Activated B cell treated with CpG ODN at 0.5 μM for 24 hours (primary cell): ENCODE measurements at regions of chr12 and their contacts with region 1.

Region 1: DNA sequence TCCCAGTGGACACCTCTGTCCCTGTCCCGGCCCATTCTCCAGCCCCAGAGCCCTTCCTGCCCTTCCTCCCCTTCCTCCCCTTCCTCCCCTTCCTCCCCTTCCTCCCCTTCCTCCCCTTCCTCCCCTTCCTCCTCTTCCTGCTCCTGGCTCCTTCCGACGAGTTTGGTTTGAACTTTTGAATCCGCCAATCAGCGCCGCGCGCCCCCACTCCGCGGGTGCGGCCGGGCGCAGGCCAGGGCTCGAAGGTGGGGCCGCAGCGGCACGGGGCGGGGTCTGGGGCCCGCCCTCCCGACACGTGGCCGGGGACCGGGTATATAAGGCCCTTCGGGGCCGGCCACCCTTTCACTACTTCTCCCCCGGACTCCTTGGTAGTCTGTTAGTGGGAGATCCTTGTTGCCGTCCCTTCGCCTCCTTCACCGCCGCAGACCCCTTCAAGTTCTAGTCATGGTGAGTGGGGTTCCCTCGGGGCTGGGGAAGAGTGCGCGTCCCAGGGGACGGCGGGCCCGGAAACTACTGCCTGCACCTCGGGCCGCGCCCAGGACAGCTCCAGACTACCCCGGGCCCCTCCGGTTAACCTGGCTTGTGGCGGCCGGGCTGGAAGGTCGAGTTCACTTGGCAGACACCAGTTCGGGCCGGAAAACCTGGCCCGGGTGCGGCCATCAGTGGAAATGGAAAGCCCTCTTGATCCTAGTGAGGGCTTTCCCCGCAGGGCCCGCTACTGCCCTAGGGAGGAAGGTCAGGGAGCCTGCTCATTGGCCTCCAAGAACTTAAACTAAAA is at the start of gene TUBA1C:
- DNase-seq: peak; percentile 90
- ATAC-seq: peak; percentile 90
- H3K4me3 Mint-ChIP-seq: peak within 1 kb of the TSS; percentile 94
- H3K27ac Mint-ChIP-seq: peak within 1 kb of the TSS; percentile 92
- H3K4me1 Mint-ChIP-seq: peaks cover 20% of the 10 kb centered on the region
- H3K27me3 Mint-ChIP-seq: no peaks in the 10 kb centered on the region
- CTCF ChIP-seq: no peak
- total RNA-seq, gene TUBA1C: 141 and 142 TPM in 2 replicates

Region 2: GRCh38 chr12:48525332-48525731 is 739.6 kb before region 1 on chr12 and contains the start of gene OR8S1:
- CTCF ChIA-PET with region 1: no interaction called
- POLR2A ChIA-PET with region 1: no interaction called
- intact Hi-C with region 1: no loop called
- DNase-seq: no peak
- ATAC-seq: no peak
- H3K4me3 Mint-ChIP-seq: no peak within 1 kb of the TSS
- H3K27ac Mint-ChIP-seq: no peak within 1 kb of the TSS
- H3K4me1 Mint-ChIP-seq: no peaks in the 10 kb centered on the region
- H3K27me3 Mint-ChIP-seq: peaks cover 12% of the 10 kb centered on the region
- CTCF ChIP-seq: no peak
- total RNA-seq, gene OR8S1: not detected in 2 replicates

Region 3: GRCh38 chr12:49018261-49019119 is 246.4 kb before region 1 on chr12 and contains the start of gene PRKAG1:
- CTCF ChIA-PET with region 1: no interaction called
- POLR2A ChIA-PET with region 1: interaction called, 3 read pairs
- intact Hi-C with region 1: loop called (anchors 1 kb)
- DNase-seq: peak; percentile 97
- ATAC-seq: peak; percentile 86
- H3K4me3 Mint-ChIP-seq: peak within 1 kb of the TSS; percentile 93
- H3K27ac Mint-ChIP-seq: peak within 1 kb of the TSS; percentile 98
- H3K4me1 Mint-ChIP-seq: peaks cover 31% of the 10 kb centered on the region
- H3K27me3 Mint-ChIP-seq: no peaks in the 10 kb centered on the region
- CTCF ChIP-seq: no peak
- total RNA-seq, gene PRKAG1: 55.3 and 70.5 TPM in 2 replicates

Region 4: GRCh38 chr12:49110464-49111155 is 154.3 kb before region 1 on chr12 and contains the start of gene LMBR1L:
- CTCF ChIA-PET with region 1: no interaction called
- POLR2A ChIA-PET with region 1: interaction called, 5 read pairs
- intact Hi-C with region 1: loop called (anchors 1 kb)
- DNase-seq: peak; percentile 83
- ATAC-seq: peak; percentile 94
- H3K4me3 Mint-ChIP-seq: peak within 1 kb of the TSS; percentile 98
- H3K27ac Mint-ChIP-seq: peak within 1 kb of the TSS; percentile 96
- H3K4me1 Mint-ChIP-seq: peaks cover 46% of the 10 kb centered on the region
- H3K27me3 Mint-ChIP-seq: no peaks in the 10 kb centered on the region
- CTCF ChIP-seq: no peak
- total RNA-seq, gene LMBR1L: 64.2 and 79.9 TPM in 2 replicates

Region 5: GRCh38 chr12:49146406-49146805 is 118.5 kb before region 1 on chr12:
- CTCF ChIA-PET with region 1: no interaction called
- POLR2A ChIA-PET with region 1: interaction called, 11 read pairs
- intact Hi-C with region 1: no loop called
- DNase-seq: no peak
- ATAC-seq: no peak
- H3K4me3 Mint-ChIP-seq: no peak overlapping the region
- H3K27ac Mint-ChIP-seq: no peak overlapping the region
- H3K4me1 Mint-ChIP-seq: peaks cover 4% of the 10 kb centered on the region
- H3K27me3 Mint-ChIP-seq: no peaks in the 10 kb centered on the region
- CTCF ChIP-seq: no peak

Region 6: GRCh38 chr12:49232940-49233841 is 31.7 kb before region 1 on chr12:
- CTCF ChIA-PET with region 1: interaction called, 3 read pairs
- POLR2A ChIA-PET with region 1: interaction called, 3 read pairs
- intact Hi-C with region 1: loop called (anchors 1 kb)
- DNase-seq: no peak
- ATAC-seq: no peak
- H3K4me3 Mint-ChIP-seq: peak overlapping the region; percentile 93
- H3K27ac Mint-ChIP-seq: peak overlapping the region; percentile 89
- H3K4me1 Mint-ChIP-seq: peaks cover 15% of the 10 kb centered on the region
- H3K27me3 Mint-ChIP-seq: no peaks in the 10 kb centered on the region
- CTCF ChIP-seq: no peak

Region 7: DNA sequence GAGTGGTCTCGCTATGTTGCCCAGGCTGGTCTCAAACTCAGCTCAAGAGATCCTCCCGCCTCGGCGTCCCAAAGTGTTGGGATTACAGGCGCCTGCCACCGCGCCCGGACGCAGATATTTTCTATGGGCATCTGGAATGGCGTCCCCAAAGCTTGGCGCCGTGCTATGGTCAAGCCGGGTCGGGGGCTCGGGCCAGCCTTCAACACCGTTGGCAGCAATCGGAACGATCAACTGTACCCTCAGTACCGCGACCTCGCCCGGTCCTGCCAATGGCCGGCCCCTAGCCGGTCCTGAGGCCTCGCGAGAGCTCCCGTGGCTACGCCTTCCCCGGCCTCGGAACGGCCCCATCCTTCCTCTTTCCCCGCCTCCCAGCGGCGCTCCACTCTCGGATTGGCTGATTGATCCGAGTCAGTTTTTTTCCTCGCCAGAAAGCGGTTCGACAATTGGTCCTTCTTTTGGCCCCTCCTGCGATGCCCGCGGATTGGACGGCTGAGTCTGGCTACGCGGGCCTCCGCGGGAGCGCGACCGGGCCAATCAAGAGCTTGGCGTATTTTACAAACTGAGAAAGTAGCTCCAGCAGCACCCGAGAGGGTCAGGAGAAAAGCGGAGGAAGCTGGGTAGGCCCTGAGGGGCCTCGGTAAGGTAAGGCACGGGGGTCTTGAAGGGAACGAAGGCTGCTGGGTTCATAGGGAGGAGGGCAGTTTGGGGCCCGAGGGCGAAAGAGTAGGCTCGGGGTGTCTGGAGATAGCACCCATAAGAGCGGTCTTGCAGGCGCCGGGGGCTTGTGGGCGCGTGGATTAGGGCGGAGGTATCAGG is 58.0 kb after region 1 on chr12 and contains the start of gene TROAP:
- CTCF ChIA-PET with region 1: interaction called, 3 read pairs
- POLR2A ChIA-PET with region 1: interaction called, 13 read pairs
- intact Hi-C with region 1: loop called (anchors 1 kb)
- DNase-seq: peak; percentile 85
- ATAC-seq: peak; percentile 99
- H3K4me3 Mint-ChIP-seq: peak within 1 kb of the TSS; percentile 94
- H3K27ac Mint-ChIP-seq: peak within 1 kb of the TSS; percentile 73
- H3K4me1 Mint-ChIP-seq: peaks cover 18% of the 10 kb centered on the region
- H3K27me3 Mint-ChIP-seq: no peaks in the 10 kb centered on the region
- CTCF ChIP-seq: no peak
- total RNA-seq, gene TROAP: 2.0 and 3.1 TPM in 2 replicates

Region 8: GRCh38 chr12:49828133-49829091 is 563.5 kb after region 1 on chr12 and contains the start of gene NCKAP5L:
- CTCF ChIA-PET with region 1: no interaction called
- POLR2A ChIA-PET with region 1: no interaction called
- intact Hi-C with region 1: loop called (anchors 10 kb)
- DNase-seq: peak; percentile 87
- ATAC-seq: peak; percentile 97
- H3K4me3 Mint-ChIP-seq: peak within 1 kb of the TSS; percentile 98
- H3K27ac Mint-ChIP-seq: peak within 1 kb of the TSS; percentile 95
- H3K4me1 Mint-ChIP-seq: peaks cover 37% of the 10 kb centered on the region
- H3K27me3 Mint-ChIP-seq: no peaks in the 10 kb centered on the region
- CTCF ChIP-seq: no peak
- total RNA-seq, gene NCKAP5L: 7.2 and 9.1 TPM in 2 replicates